OCI-LY7 (cell line): ENCODE measurements at regions of chr2 and their contacts with region 1.

Region 1: GRCh38 chr2:189124175-189124574 is 55.4 kb downstream of the COL5A2 start:
- DNase-seq: no peak
- H3K4me3 ChIP-seq: no peak overlapping the region
- H3K27ac ChIP-seq: no peak overlapping the region
- H3K4me1 ChIP-seq: no peaks in the 10 kb centered on the region
- CTCF ChIP-seq: no peak

Region 2: GRCh38 chr2:190017837-190018236 is 893.7 kb after region 1 on chr2:
- CTCF ChIA-PET with region 1: no interaction called
- POLR2A ChIA-PET with region 1: no interaction called
- intact Hi-C with region 1: loop called (anchors 5 kb)
- DNase-seq: no peak
- H3K4me3 ChIP-seq: no peak overlapping the region
- H3K27ac ChIP-seq: no peak overlapping the region
- H3K4me1 ChIP-seq: no peaks in the 10 kb centered on the region
- CTCF ChIP-seq: no peak